Right ventricle myocardium superior (tissue), 1 donor: ENCODE measurements at regions of chr5 and their contacts with region 1.

Region 1: GRCh38 chr5:173238312-173239232 is 3.6 kb upstream of the NKX2-5 start:
- DNase-seq: no peak
- ATAC-seq: no peak

Region 2: GRCh38 chr5:173163219-173163618 is 75.4 kb before region 1 on chr5:
- intact Hi-C with region 1: loop called (anchors 10 kb)
- DNase-seq: peak; percentile 54
- ATAC-seq: peak; percentile 61